ENCODE measurements at regions of chr2 and their contacts with region 1.

Region 1: DNA sequence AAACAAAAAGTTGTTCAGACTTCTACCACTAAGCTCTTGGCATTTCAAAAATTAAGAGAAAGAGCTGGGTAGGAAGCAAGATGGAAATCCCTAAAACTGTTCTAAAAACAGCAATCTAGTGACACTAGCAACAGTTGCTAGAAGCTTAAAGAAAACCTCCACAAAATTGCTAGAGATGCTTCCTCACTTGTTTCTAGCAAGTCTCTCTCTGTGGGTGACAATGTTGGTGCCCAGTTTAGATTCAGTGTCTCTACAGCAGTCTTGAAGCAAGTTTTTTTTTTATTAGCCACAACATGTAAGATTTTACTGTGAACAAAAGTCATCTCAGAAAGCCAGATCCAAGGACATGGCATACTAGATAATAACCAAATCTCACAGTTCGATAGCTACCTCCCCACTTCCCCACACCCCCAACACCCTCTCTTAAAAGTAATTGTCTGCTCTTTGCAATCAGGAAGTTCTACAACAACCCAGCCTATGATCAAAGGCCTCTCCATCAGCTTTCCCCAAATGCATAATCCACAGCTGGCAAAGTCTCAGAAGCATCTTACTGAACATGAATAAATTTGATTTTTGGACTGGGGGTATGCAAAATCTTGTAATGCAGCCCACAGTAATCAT is 70.0 kb downstream of the ANKRD44 start:
- DNase-seq: no peak
- ATAC-seq: no peak
- H3K4me3 ChIP-seq: no peak overlapping the region
- H3K27ac ChIP-seq: no peak overlapping the region
- H3K4me1 ChIP-seq: peaks cover 14 to 15% of the 10 kb centered on the region in 2 donors
- H3K27me3 ChIP-seq: no peaks in the 10 kb centered on the region
- CTCF ChIP-seq: no peak
- POLR2A ChIP-seq: no peak

Region 2: DNA sequence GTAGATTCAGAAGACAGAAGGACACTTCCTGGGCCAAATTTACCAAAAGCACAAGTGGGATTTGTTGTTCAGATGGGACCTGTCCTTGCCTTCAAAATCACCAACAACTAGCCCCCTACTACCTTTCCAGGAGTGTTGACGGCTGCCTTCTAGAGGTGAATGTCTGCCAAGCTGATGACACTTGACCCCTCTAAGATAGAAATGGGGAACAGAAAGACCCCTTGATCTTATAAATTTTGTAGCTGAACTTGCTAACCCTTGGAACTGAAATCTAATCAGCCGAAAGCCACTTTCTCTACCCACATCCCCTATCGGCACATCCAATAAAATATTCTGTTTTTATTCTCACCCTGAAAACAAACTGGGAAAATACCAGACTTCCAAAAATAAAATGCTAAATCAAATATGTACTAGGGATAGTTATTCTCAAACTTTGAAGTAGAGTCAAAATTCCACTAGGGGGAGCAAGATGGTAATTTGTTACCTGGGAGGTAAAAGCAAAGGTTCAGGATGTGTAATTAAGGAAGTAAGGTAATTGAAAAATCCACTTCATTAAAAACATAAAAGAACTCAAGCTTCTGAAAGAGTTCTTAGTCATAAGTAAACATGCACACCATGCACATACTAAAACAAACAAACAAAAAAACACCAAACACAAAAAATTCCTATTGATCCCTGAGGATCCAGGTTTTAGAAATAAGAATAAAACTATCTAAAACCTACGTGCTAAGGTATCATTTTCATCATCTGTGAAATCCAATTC is 49.2 kb before region 1 on chr2:
- in situ Hi-C with region 1: no loop called
- intact Hi-C with region 1: loop called (anchors 5 kb)
- DNase-seq: no peak
- ATAC-seq: peak; percentile 49 to 56
- H3K4me3 ChIP-seq: no peak overlapping the region
- H3K27ac ChIP-seq: no peak overlapping the region
- H3K4me1 ChIP-seq: peaks cover 8 to 12% of the 10 kb centered on the region in 2 donors
- H3K27me3 ChIP-seq: no peaks in the 10 kb centered on the region
- CTCF ChIP-seq: peak; percentile 61 to 82 (median 65)
- POLR2A ChIP-seq: no peak

Measured in gastrocnemius medialis (tissue), 4 donors.